Posterior cingulate gyrus (tissue), 11 donors: ENCODE measurements at regions of chr2 and their contacts with region 1.

Region 1: DNA sequence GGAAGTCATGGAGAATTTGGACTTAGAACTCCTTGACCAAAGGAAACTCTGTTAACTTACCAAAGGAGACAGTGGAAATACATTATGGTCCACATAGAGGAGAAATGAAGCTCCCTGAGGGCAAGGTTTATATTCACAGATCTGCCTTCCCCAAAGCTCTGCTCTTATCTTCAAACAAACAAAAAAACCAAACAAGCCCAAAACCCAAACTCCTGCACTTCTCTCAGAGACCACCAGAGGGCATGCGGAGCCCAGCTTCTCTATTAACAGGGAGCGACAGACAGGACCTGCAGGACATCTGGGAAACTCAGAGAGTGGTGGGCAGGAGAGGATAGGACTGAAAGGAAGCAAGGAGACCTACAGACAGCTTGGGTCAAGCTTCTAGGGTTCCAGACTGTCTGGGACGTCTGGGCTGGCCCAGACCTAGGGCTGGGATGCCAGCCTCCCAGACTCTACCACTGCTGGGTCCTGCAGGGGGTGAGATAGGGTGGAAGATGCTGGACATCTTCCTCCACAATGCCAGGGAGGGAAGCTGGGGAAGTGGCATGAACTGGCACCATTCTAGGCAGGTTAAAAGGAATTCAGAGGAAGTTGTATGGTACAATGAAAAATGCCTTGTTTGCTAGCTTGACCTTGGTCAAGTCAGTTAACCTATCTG is 4.0 kb upstream of the WNT10A start:
- DNase-seq: peak; percentile 46 to 95 (median 80)

Region 2: GRCh38 chr2:218975060-218975777 is 98.5 kb after region 1 on chr2:
- intact Hi-C with region 1: no loop called
- DNase-seq: no peak

Region 3: GRCh38 chr2:219155054-219155644 is 278.5 kb after region 1 on chr2:
- intact Hi-C with region 1: loop called (anchors 10 kb)
- DNase-seq: peak in 2 of 10 donors; percentile 5 to 28